HEK293 (cell line): ENCODE measurements at regions of chr6 and their contacts with region 1.

Region 1: GRCh38 chr6:132798869-132799538 is 567 bp upstream of the SLC18B1 start:
- H3K4me3 ChIP-seq: peak overlapping the region; percentile 84
- H3K27ac ChIP-seq: peak overlapping the region; percentile 67; the same call in 1 of the 2 replicates
- H3K4me1 ChIP-seq: 0 out of 2 replicates have a peak, but pooled peaks cover 2% of the 10 kb centered on the region
- CTCF ChIP-seq: peak; percentile 74

Region 2: GRCh38 chr6:132512638-132513632 is 286.1 kb before region 1 on chr6 and contains the start of gene STX7:
- CTCF ChIA-PET with region 1: no interaction called
- POLR2A ChIA-PET with region 1: interaction called, 11 read pairs
- H3K4me3 ChIP-seq: peak within 1 kb of the TSS; percentile 85
- H3K27ac ChIP-seq: peak within 1 kb of the TSS; percentile 6; the same call in 1 of the 2 replicates
- H3K4me1 ChIP-seq: peaks cover 5% of the 10 kb centered on the region
- CTCF ChIP-seq: no peak

Region 3: DNA sequence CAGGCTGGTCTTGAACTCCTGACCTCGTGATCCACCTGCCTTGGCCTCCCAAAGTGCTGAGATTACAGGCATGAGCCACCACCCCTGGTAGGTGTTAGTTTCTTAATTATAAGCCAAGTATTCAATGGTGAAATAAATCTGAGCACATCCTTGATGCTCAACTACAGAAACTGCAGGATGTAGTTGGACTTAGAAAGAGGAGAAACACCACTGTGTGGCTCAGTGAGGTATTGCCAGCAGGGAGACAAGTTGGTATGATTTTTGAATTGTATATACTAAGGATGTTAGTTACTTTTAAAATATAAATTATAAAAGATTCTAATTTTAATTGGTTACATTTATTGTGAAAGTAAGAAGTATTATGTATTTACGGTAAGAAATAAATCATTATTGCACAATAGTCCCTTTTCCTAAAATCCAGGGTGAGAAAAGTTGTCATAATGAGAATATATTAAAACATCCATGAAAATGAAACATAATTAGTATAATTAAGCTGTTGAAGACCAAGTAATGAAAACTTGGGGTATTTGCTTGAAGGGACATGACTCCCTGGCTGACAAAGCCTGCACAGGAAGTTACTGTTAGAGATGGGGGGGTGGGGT is 18.1 kb before region 1 on chr6:
- CTCF ChIA-PET with region 1: interaction called, 10 read pairs
- POLR2A ChIA-PET with region 1: interaction called, 3 read pairs
- H3K4me3 ChIP-seq: no peak overlapping the region
- H3K27ac ChIP-seq: no peak overlapping the region
- H3K4me1 ChIP-seq: no peaks in the 10 kb centered on the region
- CTCF ChIP-seq: no peak

Region 4: DNA sequence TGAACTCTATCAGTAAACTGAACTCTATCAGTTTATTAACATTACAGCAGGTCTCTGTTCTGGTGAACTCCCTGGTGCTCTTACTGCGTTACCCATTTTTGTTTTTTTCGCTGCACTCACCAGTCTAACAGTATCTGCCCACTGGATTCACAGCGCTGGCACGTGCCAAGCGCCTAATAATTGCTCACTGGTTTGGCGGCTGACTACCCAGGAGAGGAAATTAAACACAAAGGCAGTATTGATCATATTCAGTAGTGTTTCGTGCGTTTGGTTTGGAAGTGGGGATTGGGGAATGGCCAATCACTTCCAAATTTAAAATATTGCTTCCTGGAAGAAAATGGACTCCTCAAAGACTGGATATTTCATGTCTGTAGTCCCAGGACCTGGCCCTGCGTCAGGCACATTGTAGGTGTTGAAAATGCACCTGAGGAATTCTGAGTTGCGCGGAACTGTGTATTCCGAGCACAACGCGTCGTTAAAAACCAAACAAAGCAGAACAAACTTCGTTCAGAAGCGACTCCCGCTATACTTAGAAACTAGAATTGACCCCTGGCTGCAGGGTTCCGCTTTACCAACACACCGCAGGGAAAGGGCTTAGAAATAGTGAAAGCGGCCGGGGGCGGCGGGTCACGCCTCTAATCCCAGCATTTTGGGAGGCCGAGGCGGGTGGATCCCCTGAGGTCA is 14.3 kb after region 1 on chr6:
- CTCF ChIA-PET with region 1: interaction called, 42 read pairs
- POLR2A ChIA-PET with region 1: interaction called, 40 read pairs
- H3K4me3 ChIP-seq: peak overlapping the region; percentile 86
- H3K27ac ChIP-seq: peak overlapping the region; percentile 58; the same call in 1 of the 2 replicates
- H3K4me1 ChIP-seq: peaks cover 8% of the 10 kb centered on the region; the same call in 1 of the 2 replicates
- CTCF ChIP-seq: no peak

Region 5: GRCh38 chr6:132902901-132903300 is 103.9 kb after region 1 on chr6:
- CTCF ChIA-PET with region 1: no interaction called
- POLR2A ChIA-PET with region 1: no interaction called
- H3K4me3 ChIP-seq: no peak overlapping the region
- H3K27ac ChIP-seq: no peak overlapping the region
- H3K4me1 ChIP-seq: no peaks in the 10 kb centered on the region
- CTCF ChIP-seq: no peak